ENCODE measurements at regions of chr12 and their contacts with region 1.

Region 1: DNA sequence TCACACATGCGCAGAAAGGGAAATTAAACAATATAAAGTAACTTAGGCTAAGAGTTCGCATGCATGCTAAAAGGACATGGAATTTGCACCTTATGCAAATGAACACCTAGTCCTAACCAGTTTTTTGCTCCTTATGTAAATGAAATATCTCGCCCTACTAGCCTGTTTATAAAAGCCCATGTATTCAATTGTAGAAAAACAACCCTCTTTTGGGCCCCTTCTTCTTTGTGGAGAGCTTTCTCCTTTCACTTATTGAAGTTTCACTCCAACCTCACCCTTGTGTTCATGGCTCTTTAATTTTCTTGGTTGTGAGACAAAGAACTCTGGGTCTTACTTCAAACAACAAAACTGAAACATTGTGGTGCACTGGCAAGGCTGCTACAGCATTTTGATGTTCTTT is 333.4 kb upstream of the ATXN7L3B start:
- DNase-seq: no peak
- H3K4me3 ChIP-seq: no peak overlapping the region
- H3K27ac ChIP-seq: no peak overlapping the region
- H3K4me1 ChIP-seq: peaks cover 4% of the 10 kb centered on the region
- H3K27me3 ChIP-seq: peaks cover 2% of the 10 kb centered on the region
- CTCF ChIP-seq: no peak

Region 2: DNA sequence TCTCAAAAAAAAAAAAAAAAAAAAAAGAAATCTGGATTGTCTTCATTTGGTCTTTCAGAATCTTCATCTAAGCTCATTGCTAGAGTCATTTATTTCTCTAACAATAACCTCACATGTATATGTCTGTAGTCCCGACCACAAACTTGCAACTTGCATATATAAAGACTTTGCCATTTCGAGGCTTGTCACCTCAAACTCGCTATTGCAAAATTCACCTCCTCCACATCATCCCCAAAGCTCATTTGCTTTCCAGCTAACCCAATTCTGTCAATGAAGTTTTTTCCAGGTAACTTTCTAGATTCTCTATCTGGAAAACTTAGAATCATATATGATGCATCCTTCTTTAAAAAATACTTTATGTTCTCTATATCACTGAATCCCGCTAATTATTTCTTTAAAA is 59.8 kb before region 1 on chr12:
- CTCF ChIA-PET with region 1: no interaction called
- dilution Hi-C with region 1: no loop called
- in situ Hi-C with region 1: no loop called
- intact Hi-C with region 1: no loop called
- DNase-seq: no peak
- H3K4me3 ChIP-seq: no peak overlapping the region
- H3K27ac ChIP-seq: no peak overlapping the region
- H3K4me1 ChIP-seq: no peaks in the 10 kb centered on the region
- H3K27me3 ChIP-seq: no peaks in the 10 kb centered on the region
- CTCF ChIP-seq: no peak

Region 3: GRCh38 chr12:74235342-74235741 is 31.1 kb after region 1 on chr12:
- CTCF ChIA-PET with region 1: no interaction called
- dilution Hi-C with region 1: loop called (anchors 5 kb)
- in situ Hi-C with region 1: no loop called
- intact Hi-C with region 1: no loop called
- DNase-seq: no peak
- H3K4me3 ChIP-seq: no peak overlapping the region
- H3K27ac ChIP-seq: no peak overlapping the region
- H3K4me1 ChIP-seq: no peaks in the 10 kb centered on the region
- H3K27me3 ChIP-seq: no peaks in the 10 kb centered on the region
- CTCF ChIP-seq: no peak

Region 4: GRCh38 chr12:74264692-74265091 is 60.5 kb after region 1 on chr12:
- CTCF ChIA-PET with region 1: no interaction called
- dilution Hi-C with region 1: no loop called
- in situ Hi-C with region 1: no loop called
- intact Hi-C with region 1: no loop called
- DNase-seq: no peak
- H3K4me3 ChIP-seq: no peak overlapping the region
- H3K27ac ChIP-seq: no peak overlapping the region
- H3K4me1 ChIP-seq: no peaks in the 10 kb centered on the region
- H3K27me3 ChIP-seq: no peaks in the 10 kb centered on the region
- CTCF ChIP-seq: no peak

Measured in mammary epithelial cell (primary cell).